Activated CD4-positive, alpha-beta memory T cell treated with anti-CD3 and anti-CD28 coated beads for 36 hours (primary cell): ENCODE measurements at regions of chr9 and their contacts with region 1.

Region 1: DNA sequence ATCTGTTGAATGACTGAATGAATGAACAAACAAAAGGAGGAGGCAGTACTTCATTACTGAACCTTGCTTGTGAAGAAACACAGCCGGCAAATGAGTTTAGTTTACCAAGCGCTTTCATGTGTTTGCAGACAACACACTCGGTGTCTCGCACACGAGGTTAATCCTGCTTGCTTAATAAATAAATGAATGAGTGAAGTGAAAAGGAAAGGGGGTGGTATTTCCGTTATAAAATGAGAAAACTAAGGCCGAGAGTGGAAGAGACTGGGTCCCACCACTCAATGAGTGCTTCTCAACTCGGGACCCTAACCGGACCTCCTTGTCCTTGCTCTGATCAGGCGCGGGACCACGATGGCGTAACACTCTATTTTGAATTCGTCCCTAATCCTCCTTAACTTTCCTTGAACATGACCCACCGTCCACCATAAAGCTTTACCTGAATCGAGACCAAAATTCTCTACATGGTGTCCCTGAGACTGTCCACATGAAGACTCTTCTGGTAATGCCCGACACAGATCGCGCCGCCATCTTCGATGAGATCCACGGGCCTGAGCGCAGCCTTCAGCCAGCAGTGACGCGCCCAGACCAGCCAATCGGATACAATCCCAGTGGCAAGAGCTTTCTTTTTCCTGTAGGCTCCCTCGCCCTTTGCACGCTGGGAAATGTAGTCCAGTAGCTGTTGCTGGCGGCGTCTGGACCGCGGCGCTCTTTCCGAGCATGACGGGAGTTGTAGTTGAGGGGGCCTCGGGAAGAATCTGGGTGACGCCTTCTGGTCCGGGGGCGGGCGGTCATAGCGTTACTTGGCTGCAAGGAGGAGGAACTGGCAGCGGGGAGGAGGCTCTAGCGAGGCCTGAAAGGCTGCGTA is at the starts of genes MRPL50 and ZNF189:
- DNase-seq: peak; percentile 98
- H3K4me3 Mint-ChIP-seq: peak within 1 kb of the TSS; percentile 100
- H3K27ac Mint-ChIP-seq: peak within 1 kb of the TSS; percentile 98
- H3K4me1 Mint-ChIP-seq: peaks cover 68% of the 10 kb centered on the region
- H3K27me3 Mint-ChIP-seq: no peaks in the 10 kb centered on the region
- total RNA-seq, gene MRPL50: 13.3 to 13.4 TPM
- total RNA-seq, gene ZNF189: 10.2 to 10.6 TPM

Region 2: DNA sequence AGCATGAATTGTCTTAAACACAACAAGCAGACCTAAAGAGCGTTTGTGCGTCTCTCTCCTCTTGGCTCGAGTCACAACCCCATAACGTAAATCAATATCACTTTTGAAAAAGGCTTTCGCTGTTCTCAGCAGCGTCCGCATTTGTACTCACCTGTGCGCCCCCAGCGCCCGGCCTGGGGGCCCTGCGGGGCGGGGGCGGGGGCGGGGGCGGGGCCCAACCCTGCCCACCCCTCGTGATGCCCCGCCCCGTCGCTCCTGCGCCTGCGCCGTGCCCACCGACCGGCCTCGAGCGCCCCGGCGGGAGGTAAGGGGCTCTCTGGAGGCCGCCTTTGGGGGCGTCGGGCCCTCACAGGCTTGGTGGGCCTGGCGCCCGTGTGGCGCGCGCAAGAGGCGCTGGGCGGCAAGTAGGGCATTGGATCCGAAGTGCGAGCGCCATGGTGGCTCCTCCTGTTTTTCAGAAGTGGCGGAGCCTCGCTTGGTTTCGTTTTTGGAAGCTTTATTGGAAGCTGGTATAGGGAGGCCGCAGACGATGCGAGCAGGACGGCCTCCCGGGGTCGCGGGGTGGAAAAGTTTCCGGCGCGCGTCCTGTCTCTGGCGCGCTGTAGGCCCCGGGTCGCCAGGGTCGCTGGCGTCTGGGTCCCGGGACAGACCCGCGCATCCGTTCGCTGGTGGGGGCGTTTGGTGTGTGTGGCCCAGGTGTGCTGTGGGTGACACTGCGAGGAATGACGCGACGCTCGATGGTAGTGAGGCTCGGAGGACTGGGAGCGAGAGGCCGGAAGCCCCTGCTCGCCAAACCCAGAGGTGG is 1491.7 kb before region 1 on chr9 and contains the start of gene STX17:
- CTCF ChIA-PET with region 1: no interaction called
- POLR2A ChIA-PET with region 1: no interaction called
- intact Hi-C with region 1: loop called (anchors 2 kb)
- DNase-seq: peak; percentile 82
- H3K4me3 Mint-ChIP-seq: peak within 1 kb of the TSS; percentile 96
- H3K27ac Mint-ChIP-seq: peak within 1 kb of the TSS; percentile 95
- H3K4me1 Mint-ChIP-seq: peaks cover 20% of the 10 kb centered on the region
- H3K27me3 Mint-ChIP-seq: peaks cover 3% of the 10 kb centered on the region
- total RNA-seq, gene STX17: 30.6 to 36.1 TPM

Region 3: DNA sequence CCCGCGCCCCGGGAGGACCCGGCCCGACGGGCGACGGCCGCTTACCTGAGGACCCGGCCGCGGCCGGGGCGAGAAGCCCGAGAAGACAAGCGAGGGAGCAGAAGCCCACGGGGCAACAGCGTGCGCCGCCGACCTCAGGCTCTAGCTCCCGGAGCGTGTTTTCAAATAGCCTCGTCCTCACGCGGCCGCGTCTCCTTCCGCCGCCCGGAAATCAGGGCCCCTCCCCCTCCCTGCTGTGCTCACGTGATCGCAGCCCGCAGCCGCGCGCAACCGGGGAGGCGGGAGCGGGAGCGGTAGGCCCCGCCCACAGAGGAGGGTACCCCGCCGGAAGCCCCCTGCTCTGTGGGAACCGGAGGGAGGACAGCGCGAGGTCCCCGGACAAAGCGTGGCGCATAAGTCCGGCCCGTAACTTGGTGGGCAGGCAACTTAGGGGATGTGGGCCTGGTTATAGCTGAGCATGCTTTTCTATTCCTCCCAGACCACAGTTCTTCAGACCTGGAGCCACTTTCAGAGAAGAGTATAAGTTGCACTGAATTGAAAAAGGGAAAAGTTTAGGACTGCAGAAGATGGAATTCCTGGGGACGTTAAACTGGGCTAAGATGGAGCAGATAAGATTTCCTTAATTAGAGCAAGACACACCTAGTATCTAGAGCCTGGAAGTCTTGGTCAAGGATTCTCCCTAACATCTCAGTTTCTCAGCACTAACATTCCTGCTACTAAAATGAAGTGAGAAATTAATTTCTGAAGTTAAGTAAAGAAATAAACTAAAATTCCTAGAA is 1045.4 kb before region 1 on chr9 and contains the start of gene TEX10:
- CTCF ChIA-PET with region 1: no interaction called
- POLR2A ChIA-PET with region 1: no interaction called
- intact Hi-C with region 1: loop called (anchors 1 kb)
- DNase-seq: peak; percentile 92
- H3K4me3 Mint-ChIP-seq: peak within 1 kb of the TSS; percentile 87
- H3K27ac Mint-ChIP-seq: peak within 1 kb of the TSS; percentile 69
- H3K4me1 Mint-ChIP-seq: peaks cover 44% of the 10 kb centered on the region
- H3K27me3 Mint-ChIP-seq: no peaks in the 10 kb centered on the region
- total RNA-seq, gene TEX10: 20.3 to 20.7 TPM

Region 4: DNA sequence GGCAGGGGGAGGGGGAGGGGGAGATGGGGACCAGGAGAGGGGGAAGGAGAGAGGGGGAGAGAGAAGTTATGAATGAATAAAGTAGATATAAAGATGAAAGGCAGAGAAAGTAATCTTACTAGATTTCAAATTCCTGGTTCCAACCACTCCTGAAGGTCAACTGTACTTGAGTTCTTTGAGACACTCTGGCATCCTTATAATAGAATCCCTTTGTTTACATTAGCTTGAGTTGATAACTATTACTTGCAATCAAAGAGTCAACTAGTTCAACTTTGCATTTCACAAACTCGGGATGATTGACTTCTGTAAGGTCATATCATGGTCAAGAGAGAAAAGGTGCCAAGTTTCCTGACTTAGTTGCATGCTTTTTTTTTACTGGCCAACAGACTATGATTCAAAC is 55.7 kb before region 1 on chr9:
- CTCF ChIA-PET with region 1: no interaction called
- POLR2A ChIA-PET with region 1: no interaction called
- intact Hi-C with region 1: no loop called
- DNase-seq: no peak
- H3K4me3 Mint-ChIP-seq: no peak overlapping the region
- H3K27ac Mint-ChIP-seq: no peak overlapping the region
- H3K4me1 Mint-ChIP-seq: no peaks in the 10 kb centered on the region
- H3K27me3 Mint-ChIP-seq: peaks cover 10% of the 10 kb centered on the region

Region 5: GRCh38 chr9:101449140-101449721 is 50.9 kb after region 1 on chr9:
- CTCF ChIA-PET with region 1: interaction called, 3 read pairs
- POLR2A ChIA-PET with region 1: no interaction called
- intact Hi-C with region 1: loop called (anchors 1 kb)
- DNase-seq: peak; percentile 65
- H3K4me3 Mint-ChIP-seq: peak overlapping the region; percentile 57
- H3K27ac Mint-ChIP-seq: no peak overlapping the region
- H3K4me1 Mint-ChIP-seq: peaks cover 13% of the 10 kb centered on the region
- H3K27me3 Mint-ChIP-seq: peaks cover 41% of the 10 kb centered on the region

Region 6: DNA sequence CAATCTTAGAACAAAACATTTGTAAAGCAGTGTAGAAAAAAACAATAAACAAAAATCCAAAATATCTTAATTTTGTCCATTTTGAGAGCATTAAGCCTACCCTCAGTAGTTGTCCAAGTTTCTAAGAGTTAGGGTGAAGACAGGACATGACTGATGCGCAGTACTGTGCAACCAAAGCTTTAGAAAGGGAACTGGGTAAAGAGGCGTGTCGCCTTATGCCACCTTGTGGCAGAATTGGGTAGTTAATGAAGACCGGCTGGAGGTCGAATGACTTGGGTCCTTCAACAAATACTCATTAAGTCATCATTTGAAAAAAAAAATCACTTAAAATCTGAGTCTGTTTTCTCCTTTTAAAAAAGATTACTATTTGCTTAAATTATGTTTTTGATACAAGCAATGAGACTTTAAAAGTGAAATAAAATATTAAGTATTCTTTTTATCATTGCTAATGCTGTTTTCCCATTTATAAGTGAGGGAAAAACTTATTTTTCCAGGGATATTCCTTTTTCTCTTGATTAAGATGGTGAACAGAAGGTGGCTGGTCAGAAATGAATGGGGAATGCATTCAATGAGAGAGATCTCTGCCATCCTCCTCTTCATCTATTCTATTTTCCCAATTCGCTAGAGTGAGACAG is 131.9 kb after region 1 on chr9:
- CTCF ChIA-PET with region 1: interaction called, 6 read pairs
- POLR2A ChIA-PET with region 1: interaction called, 10 read pairs
- intact Hi-C with region 1: loop called (anchors 1 kb)
- DNase-seq: peak; percentile 79
- H3K4me3 Mint-ChIP-seq: no peak overlapping the region
- H3K27ac Mint-ChIP-seq: no peak overlapping the region
- H3K4me1 Mint-ChIP-seq: peaks cover 20% of the 10 kb centered on the region
- H3K27me3 Mint-ChIP-seq: peaks cover 2% of the 10 kb centered on the region